CD8-positive, alpha-beta T cell (primary cell): ENCODE measurements at regions of chr3 and their contacts with region 1.

Region 1: DNA sequence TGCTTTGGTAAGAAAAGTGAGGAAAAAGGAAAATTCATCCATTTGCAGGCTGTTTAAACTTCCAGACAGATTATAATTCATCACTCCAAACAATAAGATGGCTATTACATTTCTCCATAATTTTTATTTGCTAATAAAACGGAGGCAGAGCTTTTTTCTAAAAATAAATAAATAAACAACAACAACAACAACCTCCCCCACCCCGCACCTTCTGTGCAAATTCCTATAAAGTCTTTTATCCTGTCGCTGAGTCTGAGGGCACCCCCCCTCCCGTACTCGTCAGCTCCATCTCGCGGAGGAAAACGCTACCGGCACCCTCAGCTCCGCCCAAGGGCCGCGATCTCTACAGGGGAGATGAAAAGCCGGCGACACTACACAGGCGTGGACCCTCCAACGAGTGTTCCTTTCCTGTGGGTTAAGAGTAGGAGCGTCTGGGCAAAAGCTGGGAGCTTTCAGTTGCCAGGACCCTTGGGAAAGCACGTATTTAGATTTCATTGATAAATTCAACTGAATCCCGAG is 1.0 kb upstream of the ATP1B3 start:
- DNase-seq: peak; percentile 67 to 92 (median 84)
- ATAC-seq: peak; percentile 67
- H3K4me3 ChIP-seq: peak overlapping the region; percentile 71 to 88
- H3K4me3 Mint-ChIP-seq: peak overlapping the region; percentile 88
- H3K27ac ChIP-seq: peak overlapping the region; percentile 76 to 99
- H3K27ac Mint-ChIP-seq: peak overlapping the region; percentile 90
- H3K4me1 ChIP-seq: peaks cover 17% of the 10 kb centered on the region
- H3K4me1 Mint-ChIP-seq: peaks cover 29% of the 10 kb centered on the region
- H3K27me3 ChIP-seq: no peaks in the 10 kb centered on the region
- H3K27me3 Mint-ChIP-seq: no peaks in the 10 kb centered on the region
- CTCF ChIP-seq: peak; percentile 82

Region 2: DNA sequence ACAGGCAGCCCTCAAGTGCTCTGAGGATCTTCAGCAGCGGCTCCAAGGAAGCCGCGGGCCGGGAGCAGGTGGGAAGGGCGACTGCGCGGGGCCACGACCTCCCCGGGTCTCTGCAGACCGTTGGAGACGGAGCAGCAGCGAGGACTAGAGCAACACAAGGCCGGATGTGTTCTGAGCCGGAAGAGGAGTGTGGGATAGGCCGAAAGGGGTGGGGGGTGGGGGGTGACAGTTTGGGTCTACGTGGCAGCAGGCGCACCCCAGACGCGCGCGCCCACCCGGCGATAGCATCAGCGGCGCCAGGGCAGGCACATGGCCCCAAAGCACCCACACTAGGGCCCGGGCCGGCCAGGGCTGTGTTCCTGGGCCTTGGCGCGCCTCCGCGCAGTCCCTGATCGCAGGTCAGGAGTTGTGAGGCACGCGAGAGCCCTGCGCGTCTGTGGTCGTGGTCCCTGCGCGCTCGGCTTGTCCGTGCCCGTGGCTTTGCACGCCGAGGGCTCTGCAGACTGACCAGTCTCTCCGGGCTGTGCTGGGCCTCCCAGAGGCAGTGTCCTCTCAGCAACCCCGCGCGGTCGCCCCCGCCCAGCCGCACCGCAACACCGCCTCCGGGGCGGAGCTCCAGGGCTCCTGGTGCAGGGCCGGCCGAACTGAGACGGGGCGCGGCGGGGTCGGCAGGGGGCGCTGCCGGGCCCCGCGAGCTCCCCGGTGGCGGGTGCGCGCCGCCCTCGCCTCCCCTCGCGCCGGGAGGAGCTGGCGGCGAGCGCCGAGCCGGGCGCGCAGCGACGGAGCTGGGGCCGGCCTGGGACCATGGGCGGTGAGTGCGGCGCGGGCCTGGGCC is 644.1 kb before region 1 on chr3 and contains the start of gene PXYLP1:
- CTCF ChIA-PET with region 1: no interaction called
- POLR2A ChIA-PET with region 1: no interaction called
- intact Hi-C with region 1: loop called in 1 of 2 experiments (anchors 10 kb)
- DNase-seq: peak; percentile 78 to 95 (median 89)
- ATAC-seq: peak; percentile 90
- H3K4me3 ChIP-seq: peak within 1 kb of the TSS; percentile 89 to 94
- H3K4me3 Mint-ChIP-seq: peak within 1 kb of the TSS; percentile 91
- H3K27ac ChIP-seq: peak within 1 kb of the TSS; percentile 87 to 94
- H3K27ac Mint-ChIP-seq: peak within 1 kb of the TSS; percentile 98
- H3K4me1 ChIP-seq: peaks cover 42% of the 10 kb centered on the region
- H3K4me1 Mint-ChIP-seq: peaks cover 51% of the 10 kb centered on the region
- H3K27me3 ChIP-seq: no peaks in the 10 kb centered on the region
- H3K27me3 Mint-ChIP-seq: no peaks in the 10 kb centered on the region
- CTCF ChIP-seq: peak; percentile 66
- total RNA-seq, gene PXYLP1: 14.5 to 21.8 TPM

Region 3: DNA sequence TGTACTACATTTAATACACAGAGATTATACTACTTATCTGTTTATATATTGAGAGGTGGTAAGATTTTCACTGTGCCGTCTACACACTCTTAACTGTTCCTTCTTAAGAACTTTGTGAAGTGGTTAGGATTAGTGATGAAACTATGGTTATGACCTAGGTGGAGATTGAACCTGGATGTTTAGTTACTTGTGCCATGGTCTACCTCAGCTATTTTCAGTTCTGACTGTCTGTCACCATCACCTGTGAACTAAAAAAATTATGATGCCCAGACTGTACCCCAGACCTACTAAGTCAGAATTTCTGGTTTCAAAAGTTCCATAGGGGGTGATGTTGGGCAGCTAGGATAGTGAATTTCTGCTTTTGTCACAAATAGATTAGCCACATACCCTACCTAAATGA is 382.2 kb before region 1 on chr3:
- CTCF ChIA-PET with region 1: no interaction called
- POLR2A ChIA-PET with region 1: no interaction called
- intact Hi-C with region 1: loop called (anchors 5 kb)
- DNase-seq: peak in 2 of 9 experiments; percentile 38 to 58
- ATAC-seq: peak; percentile 78
- H3K4me3 ChIP-seq: no peak overlapping the region
- H3K4me3 Mint-ChIP-seq: peak overlapping the region; percentile 47
- H3K27ac ChIP-seq: peak overlapping the region in 1 of 2 experiments; percentile 52
- H3K27ac Mint-ChIP-seq: peak overlapping the region; percentile 89
- H3K4me1 ChIP-seq: peaks cover 84% of the 10 kb centered on the region
- H3K4me1 Mint-ChIP-seq: peaks cover 92% of the 10 kb centered on the region
- H3K27me3 ChIP-seq: no peaks in the 10 kb centered on the region
- H3K27me3 Mint-ChIP-seq: no peaks in the 10 kb centered on the region
- CTCF ChIP-seq: no peak

Region 4: DNA sequence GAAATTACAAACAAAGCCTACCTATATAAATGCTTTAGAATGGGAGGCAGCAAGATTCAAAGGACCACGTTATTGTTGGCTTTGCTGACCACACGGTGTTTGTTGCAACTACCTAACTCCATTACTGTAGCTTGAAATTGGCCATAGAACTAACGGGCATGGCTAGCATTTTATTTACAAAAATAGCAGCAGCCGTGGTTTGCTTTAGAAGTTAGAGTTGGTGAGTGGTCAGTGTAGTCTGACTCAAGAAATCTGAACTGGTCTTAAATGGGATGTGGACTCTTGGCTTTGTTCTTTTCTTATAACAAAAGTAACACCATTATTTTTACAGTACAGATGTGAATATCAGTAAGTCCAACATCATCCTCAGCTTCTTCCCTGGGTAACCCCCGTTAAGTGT is 11.6 kb after region 1 on chr3:
- CTCF ChIA-PET with region 1: interaction called, 11 read pairs
- POLR2A ChIA-PET with region 1: interaction called, 4 read pairs
- intact Hi-C with region 1: no loop called
- DNase-seq: no peak
- ATAC-seq: no peak
- H3K4me3 ChIP-seq: no peak overlapping the region
- H3K4me3 Mint-ChIP-seq: no peak overlapping the region
- H3K27ac ChIP-seq: no peak overlapping the region
- H3K27ac Mint-ChIP-seq: no peak overlapping the region
- H3K4me1 ChIP-seq: no peaks in the 10 kb centered on the region
- H3K4me1 Mint-ChIP-seq: peaks cover 32% of the 10 kb centered on the region
- H3K27me3 ChIP-seq: no peaks in the 10 kb centered on the region
- H3K27me3 Mint-ChIP-seq: no peaks in the 10 kb centered on the region
- CTCF ChIP-seq: no peak

Region 5: GRCh38 chr3:142226484-142226883 is 351.1 kb after region 1 on chr3:
- CTCF ChIA-PET with region 1: no interaction called
- POLR2A ChIA-PET with region 1: no interaction called
- intact Hi-C with region 1: loop called in 1 of 2 experiments (anchors 10 kb)
- DNase-seq: no peak
- ATAC-seq: no peak
- H3K4me3 ChIP-seq: no peak overlapping the region
- H3K4me3 Mint-ChIP-seq: peak overlapping the region; percentile 62
- H3K27ac ChIP-seq: no peak overlapping the region
- H3K27ac Mint-ChIP-seq: no peak overlapping the region
- H3K4me1 ChIP-seq: peaks cover 4% of the 10 kb centered on the region
- H3K4me1 Mint-ChIP-seq: peaks cover 17% of the 10 kb centered on the region
- H3K27me3 ChIP-seq: no peaks in the 10 kb centered on the region
- H3K27me3 Mint-ChIP-seq: no peaks in the 10 kb centered on the region
- CTCF ChIP-seq: no peak